Activated CD4-positive, alpha-beta T cell treated with anti-CD3 and anti-CD28 coated beads, Interleukin-2, amount 10 ng/mL, durations not matched to agents 24 days and 14 days (primary cell): ENCODE measurements at regions of chr4 and their contacts with region 1.

Region 1: DNA sequence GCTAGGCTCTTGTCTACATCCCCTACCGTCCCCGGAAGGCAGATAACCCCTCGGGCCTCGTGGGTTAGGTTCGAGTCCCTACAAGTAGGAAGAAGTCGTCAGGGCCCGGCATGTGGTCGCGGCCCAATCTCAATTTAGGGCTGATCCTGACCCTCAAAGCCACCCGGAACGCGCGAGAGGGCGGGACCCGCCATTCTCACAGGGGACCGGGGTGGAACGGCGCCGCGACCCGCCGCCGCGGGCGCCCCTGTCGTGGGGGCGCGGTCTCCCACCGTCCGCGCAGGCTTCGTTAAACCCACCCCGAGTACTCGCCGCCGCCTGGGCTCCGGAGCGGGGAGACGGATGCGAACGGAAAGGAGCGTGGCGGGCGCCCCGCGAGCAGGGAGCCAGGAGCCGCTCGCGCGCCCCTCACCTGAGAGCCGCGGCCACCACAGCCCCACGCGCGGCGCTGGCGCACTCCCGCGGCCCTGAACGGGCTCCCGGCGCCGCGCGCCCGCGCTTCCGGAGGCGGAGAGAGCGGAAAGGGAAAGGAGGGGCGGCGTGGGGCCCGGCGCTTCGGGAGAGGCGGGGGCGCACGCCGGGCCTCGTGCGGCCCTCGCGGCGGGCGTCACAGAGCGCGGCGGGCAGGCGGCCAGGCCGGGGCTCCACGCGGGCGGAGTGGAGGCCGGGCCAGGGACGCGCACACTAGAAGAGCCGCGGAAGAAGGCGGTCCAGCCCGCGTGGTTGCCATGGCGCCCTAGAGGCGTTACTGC is at the start of gene CFAP97:
- DNase-seq: peak; percentile 95
- H3K4me3 Mint-ChIP-seq: peak within 1 kb of the TSS; percentile 97
- H3K27ac Mint-ChIP-seq: peak within 1 kb of the TSS; percentile 99
- H3K4me1 Mint-ChIP-seq: peaks cover 36% of the 10 kb centered on the region
- H3K27me3 Mint-ChIP-seq: no peaks in the 10 kb centered on the region
- total RNA-seq, gene CFAP97: 56.6 and 59.3 TPM in 2 replicates

Region 2: GRCh38 chr4:185425647-185426352 is 222.1 kb after region 1 on chr4 and contains the start of gene UFSP2:
- intact Hi-C with region 1: loop called (anchors 2 kb)
- DNase-seq: peak; percentile 97
- H3K4me3 Mint-ChIP-seq: peak within 1 kb of the TSS; percentile 87
- H3K27ac Mint-ChIP-seq: peak within 1 kb of the TSS; percentile 98
- H3K4me1 Mint-ChIP-seq: peaks cover 24% of the 10 kb centered on the region
- H3K27me3 Mint-ChIP-seq: peaks cover 14% of the 10 kb centered on the region
- total RNA-seq, gene UFSP2: 24.8 and 25.7 TPM in 2 replicates